Gastrocnemius medialis (tissue), 4 donors: ENCODE measurements at regions of chr16 and their contacts with region 1.

Region 1: GRCh38 chr16:31427441-31428278 is 500 bp downstream of the COX6A2 start:
- DNase-seq: peak; percentile 62 to 84
- ATAC-seq: peak; percentile 12 to 28
- H3K4me3 ChIP-seq: peak overlapping the region; percentile 67 to 83 (median 79)
- H3K27ac ChIP-seq: peak overlapping the region; percentile 92 to 100 (median 98)
- H3K4me1 ChIP-seq: peaks cover 62 to 77% of the 10 kb centered on the region in 2 donors
- H3K27me3 ChIP-seq: no peaks in the 10 kb centered on the region
- CTCF ChIP-seq: no peak
- POLR2A ChIP-seq: peak in 1 of 2 donors; percentile 10

Region 2: GRCh38 chr16:30957456-30958174 is 470.0 kb before region 1 on chr16 and contains the start of gene SETD1A:
- in situ Hi-C with region 1: loop called in 1 of 4 experiments (anchors 25 kb)
- intact Hi-C with region 1: no loop called
- DNase-seq: peak; percentile 95
- ATAC-seq: peak; percentile 92 to 93
- H3K4me3 ChIP-seq: peak within 1 kb of the TSS; percentile 70 to 94 (median 84)
- H3K27ac ChIP-seq: peak within 1 kb of the TSS; percentile 97 to 99 (median 98)
- H3K4me1 ChIP-seq: peaks cover 11 to 17% of the 10 kb centered on the region in 2 donors
- H3K27me3 ChIP-seq: no peaks in the 10 kb centered on the region
- CTCF ChIP-seq: peak in 2 of 5 experiments; percentile 22 to 41
- POLR2A ChIP-seq: peak; percentile 66 to 75
- total RNA-seq, gene SETD1A: 3.8 to 15.4 (median 9.8) TPM

Region 3: GRCh38 chr16:31451681-31452351 is 24.2 kb after region 1 on chr16:
- in situ Hi-C with region 1: no loop called
- intact Hi-C with region 1: loop called (anchors 1 kb)
- DNase-seq: peak in 1 of 2 donors; percentile 84
- ATAC-seq: peak; percentile 12 to 33
- H3K4me3 ChIP-seq: no peak overlapping the region
- H3K27ac ChIP-seq: peak overlapping the region; percentile 90 to 99 (median 94)
- H3K4me1 ChIP-seq: peaks cover 52 to 53% of the 10 kb centered on the region in 2 donors
- H3K27me3 ChIP-seq: no peaks in the 10 kb centered on the region
- CTCF ChIP-seq: peak; percentile 47 to 71 (median 65)
- POLR2A ChIP-seq: no peak

Region 4: GRCh38 chr16:31528523-31529397 is 101.1 kb after region 1 on chr16:
- in situ Hi-C with region 1: no loop called
- intact Hi-C with region 1: no loop called
- DNase-seq: no peak
- ATAC-seq: no peak
- H3K4me3 ChIP-seq: peak overlapping the region; percentile 30 to 38 (median 34)
- H3K27ac ChIP-seq: no peak overlapping the region
- H3K4me1 ChIP-seq: peaks cover 0 to 4% of the 10 kb centered on the region in 2 donors
- H3K27me3 ChIP-seq: peaks cover 22 to 55% (median 34%) of the 10 kb centered on the region in 3 donors
- CTCF ChIP-seq: no peak
- POLR2A ChIP-seq: no peak